BJ (cell line): ENCODE measurements at regions of chr9 and their contacts with region 1.

Region 1: GRCh38 chr9:36873247-36873875 is 160.7 kb downstream of the PAX5 start:
- DNase-seq: no peak
- H3K4me3 ChIP-seq: no peak overlapping the region
- H3K27me3 ChIP-seq: peaks cover 22% of the 10 kb centered on the region
- CTCF ChIP-seq: peak; percentile 88

Region 2: GRCh38 chr9:36798350-36799065 is 74.9 kb before region 1 on chr9:
- CTCF ChIA-PET with region 1: no interaction called
- POLR2A ChIA-PET with region 1: no interaction called
- DNase-seq: no peak
- H3K4me3 ChIP-seq: no peak overlapping the region
- H3K27me3 ChIP-seq: no peaks in the 10 kb centered on the region; the same call in none of the 2 replicates
- CTCF ChIP-seq: no peak

Region 3: GRCh38 chr9:36833954-36834353 is 39.4 kb before region 1 on chr9:
- CTCF ChIA-PET with region 1: no interaction called
- POLR2A ChIA-PET with region 1: no interaction called
- DNase-seq: no peak
- H3K4me3 ChIP-seq: no peak overlapping the region
- H3K27me3 ChIP-seq: peaks cover 7% of the 10 kb centered on the region
- CTCF ChIP-seq: no peak

Region 4: GRCh38 chr9:36862206-36863145 is 10.9 kb before region 1 on chr9:
- CTCF ChIA-PET with region 1: interaction called, 63 read pairs
- POLR2A ChIA-PET with region 1: no interaction called
- DNase-seq: no peak
- H3K4me3 ChIP-seq: no peak overlapping the region
- H3K27me3 ChIP-seq: peaks cover 23% of the 10 kb centered on the region
- CTCF ChIP-seq: peak; percentile 85

Region 5: GRCh38 chr9:37197158-37198038 is 324.0 kb after region 1 on chr9:
- CTCF ChIA-PET with region 1: no interaction called
- POLR2A ChIA-PET with region 1: no interaction called
- DNase-seq: no peak
- H3K4me3 ChIP-seq: no peak overlapping the region
- H3K27me3 ChIP-seq: no peaks in the 10 kb centered on the region
- CTCF ChIP-seq: no peak

Region 6: DNA sequence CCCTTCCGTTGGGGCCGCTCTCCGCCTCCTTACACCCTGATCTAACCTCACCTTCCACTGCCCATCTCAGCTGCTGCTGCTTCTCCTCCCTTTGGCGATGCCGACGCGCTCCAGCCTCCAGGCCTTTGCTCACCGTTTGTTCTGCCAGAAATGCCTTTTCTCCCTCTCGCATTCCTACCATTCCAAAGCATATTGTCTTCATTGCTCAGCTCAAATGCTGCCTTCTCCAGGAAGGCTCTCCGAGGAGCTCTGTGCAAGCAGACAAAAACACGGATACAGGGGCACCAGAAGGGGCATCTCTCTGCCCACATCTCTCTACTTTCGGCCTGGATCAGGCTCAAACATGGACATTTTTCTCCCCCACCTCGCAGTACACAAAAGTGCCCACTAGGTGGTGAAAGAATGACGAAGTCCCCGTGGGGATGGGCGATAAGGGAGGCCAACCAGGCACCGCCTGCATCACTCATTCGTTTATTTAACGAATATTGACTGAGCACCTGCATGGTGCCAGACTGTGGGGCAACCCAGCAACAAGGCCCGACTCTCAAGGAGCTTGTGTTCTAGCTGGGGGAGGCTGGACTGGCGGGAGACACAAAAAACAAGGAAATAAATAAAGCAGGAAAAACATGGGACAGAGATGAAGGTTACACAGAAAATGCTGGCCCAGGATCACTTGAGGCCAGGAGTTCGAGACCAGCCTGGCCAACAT is 541.8 kb after region 1 on chr9:
- CTCF ChIA-PET with region 1: interaction called, 25 read pairs
- POLR2A ChIA-PET with region 1: no interaction called
- DNase-seq: no peak
- H3K4me3 ChIP-seq: no peak overlapping the region
- H3K27me3 ChIP-seq: no peaks in the 10 kb centered on the region
- CTCF ChIP-seq: peak; percentile 80